ENCODE measurements at regions of chr6 and their contacts with region 1.

Region 1: GRCh38 chr6:110815217-110816109 is at the start of gene CDK19:
- DNase-seq: peak; percentile 98
- ATAC-seq: peak; percentile 95
- H3K4me3 ChIP-seq: peak within 1 kb of the TSS; percentile 79 to 91
- H3K27ac ChIP-seq: peak within 1 kb of the TSS; percentile 98
- H3K4me1 ChIP-seq: peaks cover 19% of the 10 kb centered on the region
- H3K27me3 ChIP-seq: no peaks in the 10 kb centered on the region
- CTCF ChIP-seq: no peak
- total RNA-seq, gene CDK19: 48.4 TPM

Region 2: GRCh38 chr6:110492584-110492983 is 322.9 kb before region 1 on chr6:
- CTCF ChIA-PET with region 1: no interaction called
- POLR2A ChIA-PET with region 1: interaction called, 14 read pairs
- in situ Hi-C with region 1: no loop called
- intact Hi-C with region 1: no loop called
- DNase-seq: no peak
- ATAC-seq: no peak
- H3K4me3 ChIP-seq: no peak overlapping the region
- H3K27ac ChIP-seq: no peak overlapping the region
- H3K4me1 ChIP-seq: no peaks in the 10 kb centered on the region
- H3K27me3 ChIP-seq: no peaks in the 10 kb centered on the region
- CTCF ChIP-seq: no peak

Region 3: GRCh38 chr6:110784610-110784979 is 30.9 kb before region 1 on chr6:
- CTCF ChIA-PET with region 1: no interaction called
- POLR2A ChIA-PET with region 1: interaction called, 10 read pairs
- in situ Hi-C with region 1: no loop called
- intact Hi-C with region 1: no loop called
- DNase-seq: no peak
- ATAC-seq: no peak
- H3K4me3 ChIP-seq: no peak overlapping the region
- H3K27ac ChIP-seq: no peak overlapping the region
- H3K4me1 ChIP-seq: peaks cover 4% of the 10 kb centered on the region; the same call in 1 of the 2 replicates
- H3K27me3 ChIP-seq: no peaks in the 10 kb centered on the region
- CTCF ChIP-seq: no peak

Region 4: DNA sequence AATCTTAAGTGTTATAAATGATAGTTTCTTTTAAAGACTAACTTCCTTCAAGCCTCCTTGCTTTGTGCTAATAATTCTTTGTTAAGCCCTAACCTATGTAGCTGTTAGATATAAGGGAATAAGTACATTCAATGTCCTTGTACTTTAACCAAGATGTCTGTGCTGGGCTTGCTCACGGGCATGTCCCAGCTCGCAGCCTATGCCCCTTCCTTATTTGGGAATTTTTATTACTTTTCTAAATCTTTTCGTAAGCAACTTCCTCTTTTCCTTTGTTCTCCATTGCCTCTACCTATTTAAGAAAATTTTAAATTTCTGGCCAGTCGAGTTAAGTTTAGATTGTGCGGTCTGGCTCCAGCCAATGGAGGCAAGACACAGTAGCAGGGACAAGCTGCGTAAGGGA is 25.8 kb after region 1 on chr6:
- CTCF ChIA-PET with region 1: no interaction called
- POLR2A ChIA-PET with region 1: interaction called, 17 read pairs
- in situ Hi-C with region 1: no loop called
- intact Hi-C with region 1: no loop called
- DNase-seq: no peak
- ATAC-seq: no peak
- H3K4me3 ChIP-seq: no peak overlapping the region
- H3K27ac ChIP-seq: no peak overlapping the region
- H3K4me1 ChIP-seq: no peaks in the 10 kb centered on the region
- H3K27me3 ChIP-seq: no peaks in the 10 kb centered on the region
- CTCF ChIP-seq: no peak

Region 5: DNA sequence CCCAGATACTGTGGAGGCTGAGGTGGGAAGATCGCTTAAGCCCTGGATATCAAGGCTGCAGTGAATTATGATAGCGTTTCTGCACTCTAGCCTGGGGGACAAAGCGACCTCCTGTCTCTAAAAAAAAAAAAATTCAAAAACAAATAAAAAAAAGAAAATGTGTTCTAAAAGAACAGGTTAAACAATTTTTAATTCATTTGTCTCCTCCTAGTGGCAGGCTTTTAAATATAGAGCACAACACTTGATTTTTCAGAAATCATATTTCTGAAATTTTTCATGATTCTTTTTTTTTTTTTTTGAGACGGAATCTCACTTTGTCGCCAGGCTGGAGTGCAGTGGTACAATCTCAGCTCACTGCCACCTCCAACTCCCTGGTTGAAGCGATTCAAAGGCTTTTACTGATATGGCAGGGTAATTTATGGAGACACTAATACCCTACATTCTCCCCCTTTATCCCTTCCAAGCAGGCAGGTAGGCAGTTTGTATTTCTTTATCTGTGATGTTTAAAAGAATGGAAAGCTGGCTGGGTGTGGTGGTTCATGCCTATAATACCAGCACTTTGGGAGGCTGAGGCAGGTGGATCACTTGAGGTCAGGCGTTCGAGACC is 134.3 kb after region 1 on chr6:
- CTCF ChIA-PET with region 1: interaction called, 3 read pairs
- POLR2A ChIA-PET with region 1: no interaction called
- in situ Hi-C with region 1: no loop called
- intact Hi-C with region 1: loop called (anchors 5 kb)
- DNase-seq: no peak
- ATAC-seq: no peak
- H3K4me3 ChIP-seq: no peak overlapping the region
- H3K27ac ChIP-seq: no peak overlapping the region
- H3K4me1 ChIP-seq: peaks cover 7% of the 10 kb centered on the region; the same call in 1 of the 2 replicates
- H3K27me3 ChIP-seq: no peaks in the 10 kb centered on the region
- CTCF ChIP-seq: no peak; the same call in 1 of the 2 replicates

Region 6: DNA sequence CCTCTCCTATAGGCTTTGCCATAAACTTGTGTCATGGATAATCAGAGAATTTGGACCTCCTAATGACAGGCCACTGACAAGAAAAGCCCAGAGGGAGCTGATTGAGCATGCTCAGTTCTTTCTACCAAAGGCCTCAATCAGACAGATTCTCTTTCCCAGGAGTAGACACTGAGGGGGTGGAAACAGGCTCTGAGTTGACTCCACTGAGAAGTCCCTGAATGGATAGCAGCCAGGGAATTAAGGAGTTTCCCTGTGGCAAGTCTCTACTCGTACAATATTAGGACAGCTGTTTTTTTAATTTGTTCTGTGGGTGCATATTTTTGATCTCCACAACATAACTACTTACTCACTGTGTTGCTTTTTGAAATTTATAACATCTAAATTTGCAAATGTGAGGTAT is 335.1 kb after region 1 on chr6:
- CTCF ChIA-PET with region 1: no interaction called
- POLR2A ChIA-PET with region 1: no interaction called
- in situ Hi-C with region 1: no loop called
- intact Hi-C with region 1: no loop called
- DNase-seq: no peak
- ATAC-seq: no peak
- H3K4me3 ChIP-seq: no peak overlapping the region
- H3K27ac ChIP-seq: no peak overlapping the region
- H3K4me1 ChIP-seq: no peaks in the 10 kb centered on the region
- H3K27me3 ChIP-seq: peaks cover 24% of the 10 kb centered on the region
- CTCF ChIP-seq: no peak

Measured in Panc1 (cell line).